ENCODE measurements at regions of chr1 and their contacts with region 1.

Region 1: GRCh38 chr1:211514030-211514754 is 22.2 kb upstream of the RD3 start:
- DNase-seq: peak; percentile 26 to 79 (median 67)
- ATAC-seq: peak; percentile 65
- H3K4me3 ChIP-seq: no peak overlapping the region
- H3K4me3 Mint-ChIP-seq: peak overlapping the region; percentile 69
- H3K27ac ChIP-seq: no peak overlapping the region
- H3K27ac Mint-ChIP-seq: no peak overlapping the region
- H3K4me1 ChIP-seq: peaks cover 20% of the 10 kb centered on the region
- H3K4me1 Mint-ChIP-seq: peaks cover 17% of the 10 kb centered on the region
- H3K27me3 ChIP-seq: peaks cover 0 to 2% of the 10 kb centered on the region in 2 experiments
- H3K27me3 Mint-ChIP-seq: no peaks in the 10 kb centered on the region
- CTCF ChIP-seq: no peak

Region 2: DNA sequence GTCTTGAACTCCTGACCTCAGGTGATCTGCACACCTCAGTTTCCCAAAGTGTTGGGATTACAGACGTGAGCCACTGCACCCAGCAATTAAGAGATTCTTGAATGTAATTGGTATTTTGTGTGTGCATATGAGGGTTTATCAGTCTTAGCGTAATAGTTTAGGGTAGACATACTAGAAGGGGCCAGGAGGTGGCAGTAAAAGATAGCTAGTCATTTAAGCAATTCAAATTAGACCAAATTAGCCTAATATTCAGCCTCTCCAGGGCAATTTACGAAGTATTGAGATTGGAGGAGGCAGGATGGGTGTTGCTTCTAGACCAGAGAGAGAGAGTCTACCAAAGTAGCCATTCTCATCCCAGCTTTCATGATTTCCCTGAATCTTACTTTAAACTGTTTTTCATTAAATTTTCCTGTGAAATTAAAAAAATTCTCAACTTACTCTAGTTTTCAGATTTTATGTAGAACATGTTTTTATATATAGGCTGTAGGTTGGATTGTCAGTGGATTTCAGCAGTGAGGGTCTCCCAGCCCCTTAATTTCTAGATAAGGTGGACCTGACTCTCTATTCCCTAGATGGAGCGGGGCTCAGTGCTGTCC is 1065.8 kb before region 1 on chr1:
- CTCF ChIA-PET with region 1: no interaction called
- POLR2A ChIA-PET with region 1: no interaction called
- intact Hi-C with region 1: loop called in 1 of 2 experiments (anchors 5 kb)
- DNase-seq: peak in 2 of 9 experiments; percentile 43 to 52
- ATAC-seq: no peak
- H3K4me3 ChIP-seq: no peak overlapping the region
- H3K4me3 Mint-ChIP-seq: no peak overlapping the region
- H3K27ac ChIP-seq: no peak overlapping the region
- H3K27ac Mint-ChIP-seq: no peak overlapping the region
- H3K4me1 ChIP-seq: peaks cover 9% of the 10 kb centered on the region
- H3K4me1 Mint-ChIP-seq: peaks cover 15% of the 10 kb centered on the region
- H3K27me3 ChIP-seq: no peaks in the 10 kb centered on the region
- H3K27me3 Mint-ChIP-seq: no peaks in the 10 kb centered on the region
- CTCF ChIP-seq: peak; percentile 59

Region 3: DNA sequence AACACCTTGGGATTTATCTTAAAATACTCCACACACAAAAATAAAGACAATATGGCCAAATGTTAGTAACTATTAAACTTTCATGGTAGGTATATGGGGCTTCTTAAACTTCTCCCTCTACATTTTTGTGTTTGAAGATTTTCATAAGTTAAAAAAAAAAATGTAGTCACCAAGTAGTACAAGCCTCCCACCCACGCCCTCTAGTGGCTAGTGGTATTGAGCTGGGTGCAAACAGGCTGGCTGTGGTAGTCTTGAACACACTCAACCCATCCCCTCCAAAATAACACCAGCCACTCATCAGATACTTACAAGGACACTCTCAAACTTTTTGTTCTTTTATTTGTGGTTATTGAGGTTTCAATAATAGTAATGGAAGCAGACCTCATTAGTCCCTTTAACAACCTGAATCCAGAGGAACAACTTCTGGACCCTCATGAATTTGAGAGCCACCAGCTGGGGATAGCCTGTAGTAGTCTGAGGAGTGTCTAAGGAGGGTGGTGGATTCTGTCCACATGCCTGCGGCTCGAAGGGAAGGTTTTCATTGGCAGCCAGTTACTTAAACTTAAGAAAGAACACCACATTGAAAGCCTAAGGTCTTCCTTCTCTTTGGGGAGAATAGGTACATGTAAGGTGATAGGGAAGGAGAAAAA is 37.9 kb before region 1 on chr1:
- CTCF ChIA-PET with region 1: interaction called, 22 read pairs
- POLR2A ChIA-PET with region 1: no interaction called
- intact Hi-C with region 1: loop called in 1 of 2 experiments (anchors 2 kb)
- DNase-seq: peak; percentile 46 to 84 (median 81)
- ATAC-seq: peak; percentile 73
- H3K4me3 ChIP-seq: no peak overlapping the region
- H3K4me3 Mint-ChIP-seq: no peak overlapping the region
- H3K27ac ChIP-seq: no peak overlapping the region
- H3K27ac Mint-ChIP-seq: no peak overlapping the region
- H3K4me1 ChIP-seq: no peaks in the 10 kb centered on the region
- H3K4me1 Mint-ChIP-seq: no peaks in the 10 kb centered on the region
- H3K27me3 ChIP-seq: peaks cover 0 to 2% of the 10 kb centered on the region in 2 experiments
- H3K27me3 Mint-ChIP-seq: peaks cover 27% of the 10 kb centered on the region
- CTCF ChIP-seq: peak; percentile 89

Region 4: DNA sequence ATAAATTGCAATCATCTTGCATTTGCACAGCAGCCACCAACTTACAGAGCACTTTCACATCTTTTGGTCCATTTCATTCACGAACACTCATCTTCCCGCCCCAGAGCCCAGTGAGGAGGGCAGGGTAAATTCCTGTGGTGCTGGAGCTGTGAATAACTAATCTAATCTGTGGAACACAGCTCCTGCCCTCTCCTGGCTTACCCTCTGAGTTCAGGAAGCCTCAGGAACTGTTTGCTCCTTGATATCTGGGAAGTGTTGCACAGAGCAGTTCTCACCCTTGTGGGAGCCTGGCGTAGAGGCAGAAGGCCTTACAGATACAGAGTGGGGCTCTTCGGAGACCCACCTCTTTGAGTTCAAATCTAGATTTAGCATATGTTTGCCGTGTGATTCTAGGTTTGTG is 10.7 kb before region 1 on chr1:
- CTCF ChIA-PET with region 1: interaction called, 28 read pairs
- POLR2A ChIA-PET with region 1: no interaction called
- intact Hi-C with region 1: no loop called
- DNase-seq: no peak
- ATAC-seq: no peak
- H3K4me3 ChIP-seq: no peak overlapping the region
- H3K4me3 Mint-ChIP-seq: no peak overlapping the region
- H3K27ac ChIP-seq: no peak overlapping the region
- H3K27ac Mint-ChIP-seq: no peak overlapping the region
- H3K4me1 ChIP-seq: no peaks in the 10 kb centered on the region
- H3K4me1 Mint-ChIP-seq: no peaks in the 10 kb centered on the region
- H3K27me3 ChIP-seq: no peaks in the 10 kb centered on the region
- H3K27me3 Mint-ChIP-seq: peaks cover 13% of the 10 kb centered on the region
- CTCF ChIP-seq: no peak

Region 5: GRCh38 chr1:211654838-211655787 is 140.9 kb after region 1 on chr1:
- CTCF ChIA-PET with region 1: interaction called, 45 read pairs
- POLR2A ChIA-PET with region 1: no interaction called
- intact Hi-C with region 1: loop called (anchors 1 kb)
- DNase-seq: peak; percentile 63 to 86 (median 83)
- ATAC-seq: peak; percentile 95
- H3K4me3 ChIP-seq: no peak overlapping the region
- H3K4me3 Mint-ChIP-seq: no peak overlapping the region
- H3K27ac ChIP-seq: no peak overlapping the region
- H3K27ac Mint-ChIP-seq: no peak overlapping the region
- H3K4me1 ChIP-seq: no peaks in the 10 kb centered on the region
- H3K4me1 Mint-ChIP-seq: no peaks in the 10 kb centered on the region
- H3K27me3 ChIP-seq: no peaks in the 10 kb centered on the region
- H3K27me3 Mint-ChIP-seq: peaks cover 2% of the 10 kb centered on the region
- CTCF ChIP-seq: peak; percentile 86